ENCODE measurements at regions of chr12 and their contacts with region 1.

Region 1: DNA sequence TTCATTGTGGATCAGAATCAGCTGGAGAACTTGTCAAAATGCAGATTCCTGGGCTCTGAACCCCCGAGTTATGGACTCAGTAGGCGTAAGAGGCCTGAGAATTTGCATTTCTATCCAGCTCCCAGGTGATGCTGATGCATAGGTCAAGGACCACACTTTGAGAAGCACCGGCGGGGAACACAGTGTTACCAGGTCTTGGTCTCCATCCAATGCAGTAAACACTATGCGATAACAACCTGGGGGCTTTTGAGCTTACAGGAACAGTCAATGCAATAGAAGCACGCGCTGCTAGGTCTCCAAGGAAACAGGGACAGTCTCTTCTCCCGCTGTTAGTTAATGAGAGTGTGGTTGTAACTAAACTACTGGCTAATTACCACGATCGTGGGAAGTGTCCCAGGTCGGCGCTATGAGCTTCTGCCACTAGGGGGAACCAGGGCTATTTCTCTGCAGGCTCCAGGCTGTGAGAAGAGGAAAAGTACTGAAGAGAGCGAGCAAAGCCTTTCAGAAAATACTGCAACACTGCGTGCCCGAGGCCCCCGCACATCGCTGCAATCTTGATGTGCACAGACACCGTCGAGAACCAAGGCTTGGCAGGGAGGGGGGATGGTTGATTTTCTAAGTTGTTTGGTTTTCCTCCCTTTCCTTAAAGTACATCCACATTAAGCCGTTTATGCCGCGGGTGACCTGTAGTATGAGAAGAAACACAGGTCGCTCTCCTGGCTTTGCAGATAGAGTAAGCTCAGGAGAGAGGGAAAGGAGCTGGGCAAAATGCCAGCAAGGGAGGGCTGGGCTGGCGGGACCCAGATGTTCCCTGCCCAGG is 52.0 kb upstream of the KCNA1 start:
- DNase-seq: peak; percentile 20
- H3K4me3 ChIP-seq: no peak overlapping the region
- H3K27ac ChIP-seq: no peak overlapping the region
- H3K27me3 ChIP-seq: peaks cover 13% of the 10 kb centered on the region
- CTCF ChIP-seq: peak; percentile 97

Region 2: GRCh38 chr12:4743046-4743445 is 114.6 kb before region 1 on chr12:
- CTCF ChIA-PET with region 1: no interaction called
- POLR2A ChIA-PET with region 1: no interaction called
- DNase-seq: no peak
- H3K4me3 ChIP-seq: no peak overlapping the region
- H3K27ac ChIP-seq: no peak overlapping the region
- H3K27me3 ChIP-seq: no peaks in the 10 kb centered on the region
- CTCF ChIP-seq: no peak

Region 3: DNA sequence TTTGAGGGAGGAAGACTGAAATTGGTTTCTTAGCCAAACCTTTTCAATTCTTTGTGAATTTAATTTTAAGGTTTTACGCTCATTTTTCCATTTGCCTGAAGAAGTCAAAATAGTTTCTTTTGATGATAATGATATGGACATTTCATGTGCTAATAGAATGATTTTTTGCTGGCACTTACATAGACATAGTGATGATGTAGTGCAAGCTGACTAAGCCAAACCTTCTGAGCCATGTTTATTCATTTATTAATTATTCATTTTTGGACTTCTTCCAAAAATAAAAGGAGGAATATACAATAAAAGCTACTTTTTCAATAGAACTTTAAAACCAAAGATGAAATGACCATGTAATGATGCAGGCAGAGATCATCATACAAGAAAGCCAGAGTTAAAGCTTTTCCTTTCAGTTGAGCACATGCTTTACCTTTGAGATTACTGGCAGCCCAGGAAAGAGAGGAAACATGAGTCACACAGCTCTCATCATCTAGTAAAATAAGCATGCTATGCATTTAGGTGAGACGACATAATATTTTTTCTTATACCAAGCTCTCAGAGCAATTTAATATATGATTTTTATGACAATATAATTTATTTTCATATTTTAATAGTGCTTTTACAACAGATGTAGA is 76.8 kb after region 1 on chr12:
- CTCF ChIA-PET with region 1: interaction called, 19 read pairs
- POLR2A ChIA-PET with region 1: no interaction called
- DNase-seq: no peak
- H3K4me3 ChIP-seq: no peak overlapping the region
- H3K27ac ChIP-seq: no peak overlapping the region
- H3K27me3 ChIP-seq: no peaks in the 10 kb centered on the region
- CTCF ChIP-seq: no peak

Region 4: GRCh38 chr12:5003020-5003666 is 145.5 kb after region 1 on chr12:
- CTCF ChIA-PET with region 1: interaction called, 40 read pairs
- POLR2A ChIA-PET with region 1: no interaction called
- DNase-seq: peak; percentile 18
- H3K4me3 ChIP-seq: no peak overlapping the region
- H3K27ac ChIP-seq: no peak overlapping the region
- H3K27me3 ChIP-seq: peaks cover 8% of the 10 kb centered on the region
- CTCF ChIP-seq: peak; percentile 99

Region 5: GRCh38 chr12:5068126-5068525 is 210.4 kb after region 1 on chr12:
- CTCF ChIA-PET with region 1: interaction called, 11 read pairs
- POLR2A ChIA-PET with region 1: no interaction called
- DNase-seq: no peak
- H3K4me3 ChIP-seq: no peak overlapping the region
- H3K27ac ChIP-seq: no peak overlapping the region
- H3K27me3 ChIP-seq: peaks cover 20% of the 10 kb centered on the region
- CTCF ChIP-seq: no peak

Region 6: DNA sequence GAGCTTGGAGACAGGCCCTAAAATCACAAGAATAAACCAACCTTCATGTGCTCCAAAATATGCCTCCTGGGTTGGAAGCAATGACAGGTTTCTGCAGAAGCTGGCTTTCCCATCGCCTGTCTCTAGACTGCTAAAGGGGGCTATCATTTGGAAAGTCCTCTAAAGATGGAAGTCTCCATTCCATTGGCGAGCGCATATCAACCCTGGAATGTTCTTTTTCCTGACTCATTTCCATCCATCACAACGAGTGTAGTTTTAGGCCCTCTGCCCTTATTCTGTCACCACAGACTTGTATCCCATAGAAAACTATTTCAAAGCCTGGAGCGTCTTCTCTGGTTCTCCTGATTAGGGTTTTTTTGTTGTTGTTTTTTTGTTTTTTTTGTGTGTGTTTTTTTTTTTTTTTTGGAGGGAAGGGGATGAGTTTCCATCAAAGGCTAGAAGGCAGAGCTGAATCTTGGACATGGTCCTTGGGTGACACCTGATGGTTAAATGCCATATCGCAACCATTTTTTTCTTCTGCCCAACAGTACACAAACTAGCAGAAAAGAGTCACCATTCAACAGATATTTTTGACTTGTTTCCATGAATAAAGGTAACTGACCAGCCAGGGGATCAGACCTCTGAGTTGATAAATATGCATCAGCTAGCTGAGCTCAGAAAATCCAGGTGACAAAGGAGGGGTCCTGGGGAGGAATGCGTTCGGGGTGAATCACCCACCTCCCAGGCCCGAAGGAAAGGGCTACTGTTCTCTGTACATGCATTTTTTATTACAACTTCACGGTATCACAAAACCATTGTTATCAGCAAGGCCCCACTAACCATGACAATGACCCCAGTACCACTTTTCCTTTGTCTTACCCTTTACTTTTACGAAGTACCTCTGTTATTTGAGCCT is 226.5 kb after region 1 on chr12:
- CTCF ChIA-PET with region 1: interaction called, 194 read pairs
- POLR2A ChIA-PET with region 1: no interaction called
- DNase-seq: no peak
- H3K4me3 ChIP-seq: no peak overlapping the region
- H3K27ac ChIP-seq: no peak overlapping the region
- H3K27me3 ChIP-seq: peaks cover 3% of the 10 kb centered on the region
- CTCF ChIP-seq: peak; percentile 82

Region 7: GRCh38 chr12:5417500-5417899 is 559.8 kb after region 1 on chr12:
- CTCF ChIA-PET with region 1: no interaction called
- POLR2A ChIA-PET with region 1: no interaction called
- DNase-seq: no peak
- H3K4me3 ChIP-seq: no peak overlapping the region
- H3K27ac ChIP-seq: no peak overlapping the region
- H3K27me3 ChIP-seq: no peaks in the 10 kb centered on the region
- CTCF ChIP-seq: no peak